IMR-90 (cell line): ENCODE measurements at regions of chr11 and their contacts with region 1.

Region 1: GRCh38 chr11:68213555-68214174 is 569 bp upstream of the KMT5B start:
- DNase-seq: peak; percentile 96
- ATAC-seq: peak; percentile 53
- H3K4me3 ChIP-seq: peak overlapping the region; percentile 100
- H3K27ac ChIP-seq: peak overlapping the region; percentile 89
- H3K4me1 ChIP-seq: peaks cover 5% of the 10 kb centered on the region; the same call in 1 of the 2 replicates
- H3K27me3 ChIP-seq: peaks cover 22% of the 10 kb centered on the region
- CTCF ChIP-seq: no peak
- POLR2A ChIP-seq: peak; percentile 93
- RAD21 ChIP-seq: no peak

Region 2: GRCh38 chr11:68271023-68271780 is 57.5 kb after region 1 on chr11:
- CTCF ChIA-PET with region 1: no interaction called
- POLR2A ChIA-PET with region 1: no interaction called
- dilution Hi-C with region 1: no loop called
- in situ Hi-C with region 1: no loop called
- intact Hi-C with region 1: no loop called
- DNase-seq: peak; percentile 83
- ATAC-seq: peak; percentile 40
- H3K4me3 ChIP-seq: peak overlapping the region; percentile 75
- H3K27ac ChIP-seq: peak overlapping the region; percentile 97
- H3K4me1 ChIP-seq: peaks cover 10% of the 10 kb centered on the region
- H3K27me3 ChIP-seq: no peaks in the 10 kb centered on the region
- CTCF ChIP-seq: peak; percentile 57
- POLR2A ChIP-seq: 0 out of 2 replicates have a peak, but pooled peaks have one; percentile 61
- RAD21 ChIP-seq: peak; percentile 43

Region 3: GRCh38 chr11:68306636-68307035 is 93.0 kb after region 1 on chr11:
- CTCF ChIA-PET with region 1: no interaction called
- POLR2A ChIA-PET with region 1: interaction called, 10 read pairs
- dilution Hi-C with region 1: no loop called
- in situ Hi-C with region 1: no loop called
- intact Hi-C with region 1: no loop called
- DNase-seq: no peak
- ATAC-seq: no peak
- H3K4me3 ChIP-seq: no peak overlapping the region
- H3K27ac ChIP-seq: no peak overlapping the region
- H3K4me1 ChIP-seq: peaks cover 2% of the 10 kb centered on the region
- H3K27me3 ChIP-seq: no peaks in the 10 kb centered on the region; the same call in 1 of the 2 replicates
- CTCF ChIP-seq: no peak
- POLR2A ChIP-seq: no peak
- RAD21 ChIP-seq: no peak